Activated CD4-positive, alpha-beta T cell treated with anti-CD3 and anti-CD28 coated beads for 36 hours (primary cell): ENCODE measurements at regions of chr1 and their contacts with region 1.

Region 1: DNA sequence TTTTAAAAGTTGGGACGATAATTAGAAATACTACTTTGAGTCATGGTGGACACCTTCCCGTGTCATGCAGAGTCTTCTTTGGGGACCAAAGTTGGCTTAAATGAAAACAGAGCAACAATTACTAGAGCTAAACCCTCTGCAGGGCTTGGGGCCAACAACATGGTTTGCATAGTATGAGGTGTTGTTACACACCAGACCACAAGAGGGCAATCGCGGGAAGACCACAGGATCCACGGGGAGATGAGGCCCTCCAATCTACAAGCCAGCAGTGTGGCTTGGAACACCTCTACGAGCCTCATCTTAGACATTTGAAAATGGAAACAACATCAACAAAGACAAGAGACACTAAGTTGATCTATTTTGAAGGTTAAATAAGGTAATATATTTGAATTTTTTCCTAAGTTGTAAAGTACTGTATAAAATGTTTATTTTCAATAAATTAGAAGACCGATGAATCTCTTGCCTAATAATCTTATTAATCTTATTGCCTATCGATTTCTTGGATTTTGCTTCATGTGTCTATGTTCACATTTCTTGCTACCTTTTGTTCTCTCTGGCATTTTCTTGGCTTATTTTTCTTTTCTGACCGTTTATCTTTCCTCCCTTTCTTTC is 8.2 kb upstream of the SMCP start:
- DNase-seq: peak; percentile 79
- ATAC-seq: peak; percentile 75
- H3K4me3 Mint-ChIP-seq: no peak overlapping the region
- H3K27ac Mint-ChIP-seq: no peak overlapping the region
- H3K4me1 Mint-ChIP-seq: no peaks in the 10 kb centered on the region
- H3K27me3 Mint-ChIP-seq: peaks cover 5% of the 10 kb centered on the region

Region 2: DNA sequence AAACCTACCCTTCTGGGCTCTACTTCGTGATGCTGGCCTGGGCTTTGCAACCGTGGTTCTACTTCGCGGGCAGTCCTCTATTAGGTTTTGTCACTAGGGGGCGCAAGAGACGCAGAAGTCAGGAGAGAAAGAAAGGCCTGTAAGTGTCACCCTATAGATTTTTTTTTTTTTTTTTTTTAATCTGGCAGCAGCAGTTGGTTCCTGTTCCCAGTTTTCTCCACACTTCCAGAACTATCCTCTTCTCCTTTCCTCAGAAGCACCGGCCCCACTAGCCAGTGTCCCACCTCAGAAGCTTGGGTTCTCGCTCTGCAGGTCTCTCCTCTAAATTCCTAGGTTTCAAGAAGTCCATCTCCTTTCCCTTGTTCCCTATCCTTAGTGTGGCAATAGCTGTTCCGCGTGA is 215.8 kb before region 1 on chr1:
- CTCF ChIA-PET with region 1: interaction called, 5 read pairs
- POLR2A ChIA-PET with region 1: no interaction called
- intact Hi-C with region 1: loop called (anchors 1 to 10 kb)
- DNase-seq: peak; percentile 78
- ATAC-seq: peak; percentile 55
- H3K4me3 Mint-ChIP-seq: no peak overlapping the region
- H3K27ac Mint-ChIP-seq: no peak overlapping the region
- H3K4me1 Mint-ChIP-seq: peaks cover 1% of the 10 kb centered on the region
- H3K27me3 Mint-ChIP-seq: peaks cover 19% of the 10 kb centered on the region

Region 3: DNA sequence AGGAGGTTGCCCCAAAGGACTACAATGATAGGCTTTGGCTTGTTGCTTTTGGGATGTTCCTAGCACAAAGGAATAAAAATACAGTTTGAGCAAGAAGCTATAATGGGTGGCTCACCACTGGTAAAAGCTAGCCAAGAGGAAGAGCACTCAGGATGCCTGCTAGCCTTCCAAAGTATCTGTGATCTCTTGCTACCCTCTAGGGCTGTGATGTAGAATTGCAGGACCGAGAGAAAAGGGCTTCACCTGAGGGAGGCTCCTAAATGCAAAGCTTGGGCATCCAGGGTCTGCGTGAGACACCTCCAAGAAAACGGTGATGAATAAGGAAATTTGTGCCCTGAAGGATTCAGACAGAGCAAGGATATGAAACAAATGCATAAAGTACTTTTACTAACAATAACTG is 56.2 kb after region 1 on chr1:
- CTCF ChIA-PET with region 1: interaction called, 3 read pairs
- POLR2A ChIA-PET with region 1: no interaction called
- intact Hi-C with region 1: loop called in 1 of 2 experiments (anchors 2 kb)
- DNase-seq: no peak
- ATAC-seq: no peak
- H3K4me3 Mint-ChIP-seq: no peak overlapping the region
- H3K27ac Mint-ChIP-seq: no peak overlapping the region
- H3K4me1 Mint-ChIP-seq: no peaks in the 10 kb centered on the region
- H3K27me3 Mint-ChIP-seq: peaks cover 24% of the 10 kb centered on the region

Region 4: DNA sequence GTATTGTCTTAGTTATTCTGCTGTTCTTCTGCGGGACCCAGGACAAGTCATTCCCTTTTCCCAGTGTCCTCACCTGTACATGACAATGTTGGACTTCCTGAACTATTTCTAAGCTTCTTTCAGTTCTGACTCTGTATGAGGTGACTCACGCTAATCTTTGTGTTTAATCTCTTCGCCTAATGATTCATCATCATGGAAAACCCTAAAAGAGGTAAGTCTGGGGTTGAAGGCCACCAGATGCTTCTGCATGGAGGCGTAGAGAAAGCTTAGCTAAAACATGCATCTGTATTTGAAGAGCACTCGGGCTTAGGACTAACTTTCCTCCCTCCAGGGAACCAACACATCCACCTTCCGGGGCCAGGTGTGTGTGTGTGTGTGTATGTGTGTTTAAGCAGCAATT is 84.5 kb after region 1 on chr1:
- CTCF ChIA-PET with region 1: no interaction called
- POLR2A ChIA-PET with region 1: no interaction called
- intact Hi-C with region 1: no loop called
- DNase-seq: no peak
- ATAC-seq: no peak
- H3K4me3 Mint-ChIP-seq: no peak overlapping the region
- H3K27ac Mint-ChIP-seq: no peak overlapping the region
- H3K4me1 Mint-ChIP-seq: no peaks in the 10 kb centered on the region
- H3K27me3 Mint-ChIP-seq: peaks cover 9% of the 10 kb centered on the region

Region 5: DNA sequence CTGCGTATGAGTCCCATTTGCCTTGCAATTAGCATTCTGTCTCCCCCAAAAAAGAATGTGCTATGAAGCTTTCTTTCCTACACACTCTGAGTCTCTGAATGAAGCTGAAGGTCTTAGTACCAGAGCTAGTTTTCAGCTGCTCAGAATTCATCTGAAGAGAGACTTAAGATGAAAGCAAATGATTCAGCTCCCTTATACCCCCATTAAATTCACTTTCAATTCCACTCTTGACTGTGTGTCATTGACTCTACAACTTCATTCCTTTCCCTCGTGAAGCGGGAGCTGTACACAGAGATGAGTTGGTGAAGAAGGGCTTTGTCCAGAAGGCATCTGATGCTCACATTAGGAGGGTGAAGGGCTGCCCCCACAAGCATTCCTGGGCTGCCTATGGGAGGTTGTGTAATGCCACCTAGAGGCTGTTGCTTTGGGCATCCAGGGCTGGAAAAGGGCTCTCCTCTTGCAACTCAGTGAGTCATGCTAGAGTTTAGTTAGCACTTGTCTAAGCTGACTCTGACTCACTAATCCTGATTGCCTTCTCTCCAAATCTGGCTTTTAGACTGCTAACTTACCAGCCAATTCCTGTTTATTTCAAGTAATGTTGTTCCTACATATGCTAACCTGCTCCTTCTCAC is 162.9 kb after region 1 on chr1:
- CTCF ChIA-PET with region 1: no interaction called
- POLR2A ChIA-PET with region 1: no interaction called
- intact Hi-C with region 1: loop called in 1 of 2 experiments (anchors 10 kb)
- DNase-seq: peak; percentile 33
- ATAC-seq: peak; percentile 88
- H3K4me3 Mint-ChIP-seq: no peak overlapping the region
- H3K27ac Mint-ChIP-seq: no peak overlapping the region
- H3K4me1 Mint-ChIP-seq: peaks cover 2% of the 10 kb centered on the region
- H3K27me3 Mint-ChIP-seq: peaks cover 21% of the 10 kb centered on the region

Region 6: GRCh38 chr1:153192697-153193096 is 322.8 kb after region 1 on chr1:
- CTCF ChIA-PET with region 1: interaction called, 3 read pairs
- POLR2A ChIA-PET with region 1: no interaction called
- intact Hi-C with region 1: loop called in 1 of 2 experiments (anchors 10 kb)
- DNase-seq: peak; percentile 9
- ATAC-seq: no peak
- H3K4me3 Mint-ChIP-seq: no peak overlapping the region
- H3K27ac Mint-ChIP-seq: no peak overlapping the region
- H3K4me1 Mint-ChIP-seq: no peaks in the 10 kb centered on the region
- H3K27me3 Mint-ChIP-seq: peaks cover 45% of the 10 kb centered on the region

Region 7: GRCh38 chr1:153220606-153221303 is 350.8 kb after region 1 on chr1:
- CTCF ChIA-PET with region 1: interaction called, 7 read pairs
- POLR2A ChIA-PET with region 1: no interaction called
- intact Hi-C with region 1: loop called (anchors 1 to 5 kb)
- DNase-seq: no peak
- ATAC-seq: no peak
- H3K4me3 Mint-ChIP-seq: no peak overlapping the region
- H3K27ac Mint-ChIP-seq: no peak overlapping the region
- H3K4me1 Mint-ChIP-seq: no peaks in the 10 kb centered on the region
- H3K27me3 Mint-ChIP-seq: peaks cover 12% of the 10 kb centered on the region